ENCODE measurements at regions of chr6 and their contacts with region 1.

Region 1: GRCh38 chr6:38350942-38351341 is 288.8 kb downstream of the BTBD9 start:
- DNase-seq: no peak
- H3K4me3 ChIP-seq: no peak overlapping the region
- H3K27ac ChIP-seq: no peak overlapping the region
- H3K4me1 ChIP-seq: no peaks in the 10 kb centered on the region
- H3K27me3 ChIP-seq: no peaks in the 10 kb centered on the region
- CTCF ChIP-seq: no peak

Region 2: GRCh38 chr6:39407446-39407993 is 1056.6 kb after region 1 on chr6:
- CTCF ChIA-PET with region 1: no interaction called
- POLR2A ChIA-PET with region 1: interaction called, 12 read pairs
- intact Hi-C with region 1: no loop called
- DNase-seq: no peak
- H3K4me3 ChIP-seq: no peak overlapping the region
- H3K27ac ChIP-seq: no peak overlapping the region
- H3K4me1 ChIP-seq: no peaks in the 10 kb centered on the region
- H3K27me3 ChIP-seq: no peaks in the 10 kb centered on the region
- CTCF ChIP-seq: no peak

Measured in A673 (cell line).